ENCODE measurements at regions of chr22 and their contacts with region 1.

Region 1: DNA sequence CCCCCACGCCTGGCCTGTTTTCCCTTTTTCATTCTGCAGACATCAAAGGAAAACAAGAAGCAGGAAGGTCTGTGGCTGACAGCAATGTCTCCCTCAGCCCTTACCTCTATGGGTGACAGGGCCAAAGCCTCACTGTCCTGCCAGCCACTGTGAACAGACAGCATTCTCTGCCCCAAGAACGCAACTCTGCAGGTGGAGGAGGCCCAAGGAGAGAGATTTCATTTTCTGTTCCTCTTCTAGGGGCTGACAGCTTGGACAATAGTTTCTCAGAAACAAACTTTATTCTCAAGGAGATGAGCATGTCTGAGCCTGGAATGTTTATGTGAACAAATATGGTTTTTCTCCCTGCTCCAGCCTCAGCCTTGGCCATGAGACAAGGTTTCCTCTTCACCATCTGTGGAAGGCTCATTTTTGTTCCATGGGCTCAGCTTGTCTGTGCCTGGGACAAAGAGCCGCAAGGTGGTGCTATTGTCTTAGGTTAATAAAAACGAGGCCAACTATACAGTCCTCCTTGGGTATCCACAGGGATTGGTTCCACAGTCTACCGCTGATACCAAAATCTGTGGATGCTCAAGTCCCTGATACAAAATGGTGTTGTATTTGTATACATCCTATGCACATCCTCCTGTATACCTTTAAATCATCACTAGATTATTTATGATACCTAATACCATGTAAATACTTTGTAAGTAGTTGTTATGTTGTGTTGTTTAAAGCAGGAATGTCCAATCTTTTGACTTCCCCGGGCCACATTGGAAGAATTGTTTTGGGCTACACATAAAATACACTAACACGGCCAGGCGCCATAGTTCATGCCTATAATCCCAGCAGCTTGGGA is 5.8 kb downstream of the PIWIL3 start:
- DNase-seq: peak; percentile 59
- H3K4me3 Mint-ChIP-seq: no peak overlapping the region
- H3K27ac Mint-ChIP-seq: no peak overlapping the region
- H3K4me1 Mint-ChIP-seq: no peaks in the 10 kb centered on the region
- H3K27me3 Mint-ChIP-seq: peaks cover 6% of the 10 kb centered on the region

Region 2: DNA sequence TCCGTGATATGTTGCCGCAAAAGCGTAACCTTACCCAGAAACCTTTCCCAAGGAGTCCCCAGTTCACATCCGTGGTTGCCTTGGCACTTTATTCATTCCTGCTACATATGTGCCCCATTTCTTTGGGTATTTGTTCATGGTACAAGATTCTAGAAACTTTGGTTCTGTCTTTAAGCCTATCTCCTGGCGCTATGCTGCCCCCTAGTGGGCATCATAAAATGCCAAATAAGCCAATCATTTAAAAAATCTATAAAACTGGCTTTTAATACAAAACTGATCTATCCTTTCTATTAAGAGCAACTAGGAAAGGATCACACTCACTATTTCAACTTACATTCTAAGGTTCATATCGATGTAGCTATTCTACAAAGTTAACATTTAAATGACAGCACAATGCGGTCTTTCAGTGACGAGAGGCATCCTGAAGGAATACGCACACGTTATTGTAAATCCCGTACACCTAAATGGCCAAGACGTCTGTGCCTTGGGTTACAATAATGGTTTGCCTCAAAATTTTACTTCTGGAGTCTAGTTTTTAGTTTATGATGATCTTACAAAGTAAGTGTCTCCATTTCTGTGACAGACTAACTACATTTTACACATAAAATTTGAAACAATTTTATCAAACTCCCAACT is 10.5 kb before region 1 on chr22:
- CTCF ChIA-PET with region 1: interaction called, 32 read pairs
- POLR2A ChIA-PET with region 1: no interaction called
- intact Hi-C with region 1: no loop called
- DNase-seq: peak; percentile 60
- H3K4me3 Mint-ChIP-seq: no peak overlapping the region
- H3K27ac Mint-ChIP-seq: no peak overlapping the region
- H3K4me1 Mint-ChIP-seq: no peaks in the 10 kb centered on the region
- H3K27me3 Mint-ChIP-seq: no peaks in the 10 kb centered on the region

Region 3: GRCh38 chr22:24805790-24806662 is 37.3 kb after region 1 on chr22 and contains the start of gene SGSM1:
- CTCF ChIA-PET with region 1: interaction called, 19 read pairs
- POLR2A ChIA-PET with region 1: no interaction called
- intact Hi-C with region 1: no loop called
- DNase-seq: peak; percentile 85
- H3K4me3 Mint-ChIP-seq: peak within 1 kb of the TSS; percentile 66
- H3K27ac Mint-ChIP-seq: no peak within 1 kb of the TSS
- H3K4me1 Mint-ChIP-seq: peaks cover 47% of the 10 kb centered on the region
- H3K27me3 Mint-ChIP-seq: no peaks in the 10 kb centered on the region
- total RNA-seq, gene SGSM1: 0.29 to 0.38 TPM

Region 4: DNA sequence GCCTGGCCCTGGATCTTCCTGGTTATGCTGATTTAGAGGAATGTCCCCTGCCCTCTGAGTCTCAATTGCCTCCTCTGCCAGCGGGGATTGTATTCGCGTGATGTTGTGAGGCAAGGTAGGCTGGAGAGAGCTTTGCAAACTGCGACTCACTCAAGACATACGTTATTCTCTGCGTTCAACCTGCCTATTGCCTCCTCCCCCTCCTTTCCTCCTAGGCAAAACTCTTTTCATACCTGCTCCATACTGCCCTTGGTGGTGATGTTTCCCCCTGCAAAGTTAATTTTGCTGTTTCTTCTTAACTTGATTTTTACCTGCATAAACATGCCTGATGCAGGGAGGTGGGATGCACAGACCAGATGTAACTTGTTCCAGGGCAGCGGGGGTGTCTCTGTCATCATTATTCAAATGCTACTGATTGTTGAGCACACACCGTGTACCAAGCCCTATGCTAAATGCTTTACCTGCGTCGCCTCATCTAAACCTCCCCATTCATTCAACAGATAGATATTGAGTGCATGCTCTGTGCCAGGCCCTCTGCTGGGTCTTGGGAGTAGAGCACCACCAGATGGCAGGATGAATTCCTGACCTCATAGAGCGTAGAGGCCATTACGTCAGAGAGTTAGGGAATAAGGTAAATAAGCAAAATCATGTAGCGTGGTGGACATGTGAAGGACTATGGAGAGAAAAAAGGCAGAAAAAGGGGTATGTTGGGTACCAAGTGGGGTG is 66.3 kb after region 1 on chr22:
- CTCF ChIA-PET with region 1: interaction called, 15 read pairs
- POLR2A ChIA-PET with region 1: no interaction called
- intact Hi-C with region 1: loop called (anchors 5 kb)
- DNase-seq: no peak
- H3K4me3 Mint-ChIP-seq: no peak overlapping the region
- H3K27ac Mint-ChIP-seq: no peak overlapping the region
- H3K4me1 Mint-ChIP-seq: peaks cover 4% of the 10 kb centered on the region
- H3K27me3 Mint-ChIP-seq: no peaks in the 10 kb centered on the region

Region 5: DNA sequence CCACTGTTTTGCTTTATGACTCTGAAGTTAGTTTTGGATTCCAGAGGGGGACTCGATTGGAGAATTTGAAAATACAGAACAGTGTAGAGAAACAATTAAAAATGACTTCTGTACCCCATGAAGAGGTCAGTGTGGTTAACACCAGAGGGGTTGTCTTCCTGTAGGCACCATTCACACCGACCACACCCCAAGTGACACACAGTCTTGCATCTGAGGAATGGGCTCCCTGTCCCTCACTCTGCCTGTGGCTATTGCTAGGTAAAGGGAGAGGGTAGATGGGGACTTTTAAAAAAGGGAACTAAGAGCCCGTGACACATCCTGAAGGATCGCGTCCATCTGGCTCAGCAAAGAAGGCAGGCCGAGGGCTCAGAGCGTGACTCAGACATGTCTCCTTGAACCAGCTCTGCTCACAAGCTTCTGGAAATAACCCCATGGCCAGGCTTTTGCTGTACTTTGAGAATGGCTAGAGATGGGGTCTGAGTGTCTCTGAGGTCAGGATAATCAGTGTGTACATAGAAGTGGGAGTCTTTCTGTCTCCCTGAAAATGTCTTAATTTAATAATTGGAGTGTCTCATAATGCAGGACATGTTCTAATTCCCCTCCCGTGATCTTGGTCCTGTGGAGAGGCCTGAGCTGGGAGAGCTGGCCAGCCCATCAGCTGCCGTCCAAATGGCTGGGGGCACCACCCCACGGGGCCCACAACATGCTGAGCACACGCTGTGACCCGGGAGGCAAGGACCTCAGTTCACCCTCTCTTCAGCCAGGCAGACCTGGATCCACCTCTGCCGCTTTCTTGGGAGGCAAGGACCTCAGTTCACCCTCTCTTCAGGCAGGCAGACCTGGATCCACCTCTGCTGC is 76.5 kb after region 1 on chr22:
- CTCF ChIA-PET with region 1: interaction called, 162 read pairs
- POLR2A ChIA-PET with region 1: interaction called, 3 read pairs
- intact Hi-C with region 1: loop called (anchors 1 kb)
- DNase-seq: no peak
- H3K4me3 Mint-ChIP-seq: no peak overlapping the region
- H3K27ac Mint-ChIP-seq: no peak overlapping the region
- H3K4me1 Mint-ChIP-seq: peaks cover 3% of the 10 kb centered on the region
- H3K27me3 Mint-ChIP-seq: no peaks in the 10 kb centered on the region

Region 6: DNA sequence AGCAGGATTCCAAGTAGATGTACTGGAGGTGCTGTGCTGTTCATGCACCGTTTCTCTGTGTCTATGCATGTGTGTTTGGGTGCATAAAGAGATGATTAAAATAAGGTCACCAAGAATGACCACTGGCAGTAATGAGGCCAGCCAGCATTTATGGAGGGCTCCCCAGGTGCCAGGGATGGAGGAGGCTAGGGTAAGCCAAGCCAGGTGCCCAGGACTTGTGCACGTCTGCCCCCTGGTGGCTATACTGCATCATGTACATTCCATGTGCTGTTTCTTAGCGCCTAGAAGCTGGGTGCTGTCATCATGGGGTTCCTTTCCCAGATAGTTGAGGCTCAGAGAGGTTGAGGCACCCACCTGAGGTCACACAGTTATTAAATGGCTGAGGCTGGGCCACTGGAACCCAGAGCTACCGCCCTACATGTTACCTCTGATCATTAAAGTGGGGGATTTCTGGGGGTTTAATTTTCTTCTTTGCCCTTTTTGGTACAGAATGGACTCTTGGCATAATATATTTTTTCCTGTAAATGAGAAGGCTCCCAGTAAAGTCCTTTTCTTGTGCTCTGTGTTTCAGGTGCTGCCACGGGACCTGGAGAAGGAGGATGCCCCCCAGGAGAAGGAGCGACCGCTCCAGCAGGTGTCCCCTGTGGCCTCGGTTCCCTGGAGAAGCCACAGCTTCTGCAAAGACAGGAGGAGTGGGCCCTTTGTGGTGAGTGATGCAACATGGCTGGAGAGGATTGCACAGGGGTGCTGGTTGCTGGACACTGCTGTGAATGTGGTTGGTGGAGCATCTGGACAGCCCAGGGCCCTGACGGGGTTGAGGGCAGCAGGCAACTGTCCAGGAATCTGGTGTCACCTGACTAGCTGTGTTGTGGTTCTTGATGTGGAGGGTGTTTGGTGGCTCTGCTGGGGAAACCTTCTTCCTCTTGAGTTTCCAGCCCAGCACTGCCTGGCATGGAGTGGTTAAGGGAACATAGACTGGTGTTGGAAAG is 280.2 kb after region 1 on chr22:
- CTCF ChIA-PET with region 1: interaction called, 12 read pairs
- POLR2A ChIA-PET with region 1: no interaction called
- intact Hi-C with region 1: no loop called
- DNase-seq: peak; percentile 80
- H3K4me3 Mint-ChIP-seq: no peak overlapping the region
- H3K27ac Mint-ChIP-seq: no peak overlapping the region
- H3K4me1 Mint-ChIP-seq: peaks cover 8% of the 10 kb centered on the region
- H3K27me3 Mint-ChIP-seq: peaks cover 6% of the 10 kb centered on the region

Region 7: GRCh38 chr22:25219948-25220442 is 451.2 kb after region 1 on chr22:
- CTCF ChIA-PET with region 1: no interaction called
- POLR2A ChIA-PET with region 1: no interaction called
- intact Hi-C with region 1: no loop called
- DNase-seq: no peak
- H3K4me3 Mint-ChIP-seq: no peak overlapping the region
- H3K27ac Mint-ChIP-seq: no peak overlapping the region
- H3K4me1 Mint-ChIP-seq: no peaks in the 10 kb centered on the region
- H3K27me3 Mint-ChIP-seq: peaks cover 11% of the 10 kb centered on the region